G401 (cell line): ENCODE measurements at regions of chr3 and their contacts with region 1.

Region 1: DNA sequence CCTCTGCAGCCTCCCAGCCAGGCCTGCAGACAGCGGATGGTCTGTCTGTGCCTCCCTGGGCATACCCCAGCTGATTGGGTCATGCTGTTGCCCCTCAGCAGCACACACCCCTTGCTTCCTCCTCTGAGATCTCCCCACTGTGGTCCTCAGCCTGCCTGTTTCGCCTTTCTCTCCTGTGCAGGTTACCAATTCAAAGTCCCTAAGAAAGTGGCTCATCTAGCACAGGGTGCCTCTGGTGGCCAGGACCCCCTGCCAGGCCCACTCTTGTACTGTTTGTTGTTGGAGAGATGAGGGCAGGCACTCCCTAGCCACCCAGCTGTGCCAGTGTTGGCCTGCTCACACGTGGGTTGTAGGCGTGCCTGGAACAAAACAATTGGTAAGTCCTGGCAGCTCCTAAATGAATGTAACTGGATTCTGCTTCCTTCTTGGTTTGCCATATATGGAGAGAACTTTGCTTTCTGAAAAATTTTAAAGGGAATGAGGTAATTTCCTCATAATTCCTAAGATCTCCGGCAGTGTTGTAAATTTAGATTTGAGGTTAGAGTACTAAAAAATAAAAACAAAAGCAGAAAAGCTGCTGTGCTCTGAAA is 213.2 kb upstream of the IL12A start:
- DNase-seq: no peak

Region 2: DNA sequence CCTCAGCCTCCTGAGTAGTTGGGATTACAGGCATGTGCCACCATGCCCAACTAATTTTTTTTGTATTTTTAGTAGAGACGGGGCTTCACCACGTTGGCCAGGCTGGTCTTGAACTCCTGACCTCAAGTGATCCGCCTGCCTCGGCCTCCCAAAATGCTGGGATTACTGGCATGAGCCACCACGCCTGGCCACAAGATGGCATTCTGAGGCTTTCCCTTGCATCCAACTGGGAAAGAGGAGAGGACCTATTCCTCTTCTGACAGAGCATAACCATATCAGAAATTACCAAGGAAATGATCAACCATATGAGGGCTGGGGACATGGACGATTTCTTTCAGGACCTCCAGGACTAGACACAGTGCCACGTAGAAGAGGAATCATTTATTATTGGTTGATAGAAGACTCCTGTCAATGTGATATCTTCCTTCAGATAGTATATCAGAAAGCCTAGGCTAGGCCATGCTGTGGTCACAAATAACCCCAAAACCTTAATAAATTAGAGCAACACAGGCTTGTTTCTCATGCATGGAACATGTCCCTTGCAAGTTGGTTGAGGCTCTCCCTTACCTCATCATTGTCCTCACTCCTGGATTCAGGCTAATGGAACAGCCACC is 159.1 kb before region 1 on chr3:
- in situ Hi-C with region 1: loop called (anchors 25 kb)
- DNase-seq: peak; percentile 36